CD4-positive, alpha-beta T cell (primary cell): ENCODE measurements at regions of chr20 and their contacts with region 1.

Region 1: DNA sequence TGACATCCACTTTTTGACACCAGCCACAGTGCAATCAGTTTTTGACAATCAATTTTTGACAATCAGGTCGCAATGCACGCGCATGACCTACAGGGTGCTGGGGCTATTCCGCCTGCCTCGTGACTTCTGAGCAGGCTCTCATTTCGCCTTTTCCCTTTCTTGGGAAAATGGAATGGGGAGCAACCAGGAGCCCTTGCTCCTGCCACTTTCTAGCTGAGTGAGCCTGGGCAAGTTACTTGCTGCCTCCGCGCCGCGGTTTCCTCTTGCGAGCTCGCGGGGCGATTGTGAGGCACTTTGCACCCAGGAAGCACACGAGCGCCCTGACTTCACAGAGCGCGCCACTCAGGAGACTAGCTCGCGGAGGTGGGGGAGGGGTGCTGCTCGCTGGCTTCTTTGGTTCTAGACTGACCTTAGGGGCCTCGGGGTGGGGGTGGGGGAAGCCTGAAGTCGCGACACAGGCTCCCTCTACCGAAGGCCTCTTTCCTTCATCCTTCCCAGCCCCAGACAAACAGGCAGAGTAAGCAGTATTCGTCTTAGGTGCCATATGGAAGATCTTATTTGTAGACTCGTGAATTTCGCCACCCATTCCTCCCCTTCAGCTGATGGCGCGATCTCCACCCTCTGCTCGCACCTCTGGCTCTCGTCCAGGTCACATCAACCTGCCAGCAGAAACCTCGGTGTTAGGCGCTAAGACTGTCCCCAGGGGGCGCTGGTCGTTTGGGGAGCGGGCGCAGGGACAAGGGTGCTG is 4.6 kb downstream of the TP53TG5 start:
- DNase-seq: peak; percentile 84 to 95 (median 89)
- ATAC-seq: peak; percentile 89
- H3K4me3 ChIP-seq: peak overlapping the region; percentile 63
- H3K4me3 Mint-ChIP-seq: peak overlapping the region; percentile 90
- H3K27ac ChIP-seq: peak overlapping the region; percentile 62 to 73
- H3K27ac Mint-ChIP-seq: peak overlapping the region; percentile 96
- H3K4me1 ChIP-seq: peaks cover 32% of the 10 kb centered on the region
- H3K4me1 Mint-ChIP-seq: peaks cover 46% of the 10 kb centered on the region
- H3K27me3 ChIP-seq: no peaks in the 10 kb centered on the region
- H3K27me3 Mint-ChIP-seq: no peaks in the 10 kb centered on the region
- CTCF ChIP-seq: peak; percentile 86

Region 2: DNA sequence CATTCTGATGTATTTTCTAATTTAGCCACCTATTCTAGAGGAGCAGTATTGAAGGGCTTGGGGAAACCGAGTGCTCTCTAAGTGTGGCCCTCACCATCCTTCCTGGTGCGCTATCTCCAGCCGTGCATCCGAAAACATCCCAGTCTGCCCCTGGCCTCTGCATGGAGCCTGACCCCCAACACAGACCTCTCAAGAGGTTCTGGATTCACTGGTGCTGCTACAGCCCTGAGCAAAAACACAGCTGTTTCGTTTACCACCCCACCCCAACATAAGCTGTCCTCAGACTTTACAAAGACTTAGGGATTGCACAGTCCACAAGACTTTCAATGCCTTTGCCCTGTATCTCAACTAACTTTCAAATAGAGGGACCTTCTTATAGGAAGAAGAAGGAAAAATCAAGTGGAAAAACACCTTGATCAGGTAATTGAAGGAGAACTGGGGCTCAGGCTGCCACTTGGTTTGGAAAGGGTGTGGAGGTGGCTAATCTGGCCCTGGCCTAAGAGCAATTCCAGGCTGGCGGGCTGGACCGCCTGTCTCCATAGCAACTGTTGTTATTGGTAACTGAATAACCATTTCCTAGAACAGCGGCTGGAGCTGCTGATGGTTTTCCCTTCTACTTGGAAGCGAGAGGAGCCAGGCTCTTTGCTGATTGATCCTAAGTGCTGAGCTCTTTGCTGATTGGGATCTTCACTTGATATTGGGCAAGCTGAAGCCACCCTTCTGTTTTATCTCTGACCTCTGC is 1549.0 kb before region 1 on chr20:
- CTCF ChIA-PET with region 1: no interaction called
- POLR2A ChIA-PET with region 1: no interaction called
- intact Hi-C with region 1: no loop called
- DNase-seq: no peak
- ATAC-seq: no peak
- H3K4me3 ChIP-seq: no peak overlapping the region
- H3K4me3 Mint-ChIP-seq: no peak overlapping the region
- H3K27ac ChIP-seq: no peak overlapping the region
- H3K27ac Mint-ChIP-seq: no peak overlapping the region
- H3K4me1 ChIP-seq: no peaks in the 10 kb centered on the region
- H3K4me1 Mint-ChIP-seq: no peaks in the 10 kb centered on the region
- H3K27me3 ChIP-seq: no peaks in the 10 kb centered on the region
- H3K27me3 Mint-ChIP-seq: peaks cover 3% of the 10 kb centered on the region
- CTCF ChIP-seq: no peak

Region 3: GRCh38 chr20:45406259-45407066 is 32.9 kb after region 1 on chr20:
- CTCF ChIA-PET with region 1: interaction called, 6 read pairs
- POLR2A ChIA-PET with region 1: interaction called, 49 read pairs
- intact Hi-C with region 1: loop called in 1 of 2 experiments (anchors 2 kb)
- DNase-seq: peak in 12 of 14 experiments; percentile 14 to 69 (median 42)
- ATAC-seq: peak; percentile 50
- H3K4me3 ChIP-seq: peak overlapping the region; percentile 76
- H3K4me3 Mint-ChIP-seq: peak overlapping the region; percentile 91
- H3K27ac ChIP-seq: peak overlapping the region; percentile 40 to 65
- H3K27ac Mint-ChIP-seq: peak overlapping the region; percentile 60
- H3K4me1 ChIP-seq: peaks cover 27% of the 10 kb centered on the region
- H3K4me1 Mint-ChIP-seq: peaks cover 26% of the 10 kb centered on the region
- H3K27me3 ChIP-seq: no peaks in the 10 kb centered on the region
- H3K27me3 Mint-ChIP-seq: no peaks in the 10 kb centered on the region
- CTCF ChIP-seq: no peak

Region 4: DNA sequence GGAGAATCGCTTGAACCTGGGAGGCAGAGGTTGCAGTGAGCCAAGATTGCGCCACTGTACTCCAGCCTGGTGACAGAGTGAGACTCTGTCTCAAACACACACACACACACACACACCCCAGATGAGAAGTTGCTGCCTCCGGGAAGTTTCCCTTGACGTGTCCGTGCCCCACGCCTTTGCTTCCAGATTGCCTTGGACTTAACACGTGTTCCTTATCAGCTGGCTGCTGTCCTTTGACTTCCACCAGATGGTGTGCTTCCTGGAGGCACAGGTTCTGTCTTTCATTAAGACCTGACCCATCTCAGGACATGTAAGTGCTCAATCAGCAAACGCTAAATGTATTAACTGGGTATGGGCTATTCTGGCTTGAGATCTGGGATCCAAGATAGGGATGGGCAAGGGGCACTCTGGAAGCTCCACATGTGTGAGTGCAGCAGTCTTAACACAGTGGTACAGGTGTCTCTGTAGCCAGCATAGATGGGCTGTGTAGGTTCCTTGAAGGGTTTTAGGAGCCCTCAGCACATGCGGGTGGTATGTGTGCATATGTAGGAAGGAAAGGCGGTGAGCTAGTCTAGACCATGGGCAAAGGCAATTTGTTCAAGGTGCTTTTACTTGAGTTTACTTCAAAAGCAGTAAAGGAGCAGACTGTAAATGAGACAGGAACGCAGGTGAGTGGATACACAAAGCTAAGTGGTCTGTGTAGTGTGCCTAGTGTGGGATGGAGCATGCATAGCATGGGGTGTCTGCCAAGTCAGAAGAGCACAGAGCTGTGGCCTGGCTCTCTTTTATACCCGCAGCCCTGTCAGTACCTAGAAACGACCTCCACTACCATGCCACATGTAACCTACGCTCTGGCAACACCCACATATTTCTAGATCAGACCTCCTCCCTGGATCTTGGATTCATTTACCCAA is 54.0 kb after region 1 on chr20:
- CTCF ChIA-PET with region 1: interaction called, 3 read pairs
- POLR2A ChIA-PET with region 1: interaction called, 13 read pairs
- intact Hi-C with region 1: no loop called
- DNase-seq: no peak
- ATAC-seq: no peak
- H3K4me3 ChIP-seq: no peak overlapping the region
- H3K4me3 Mint-ChIP-seq: no peak overlapping the region
- H3K27ac ChIP-seq: no peak overlapping the region
- H3K27ac Mint-ChIP-seq: no peak overlapping the region
- H3K4me1 ChIP-seq: no peaks in the 10 kb centered on the region
- H3K4me1 Mint-ChIP-seq: no peaks in the 10 kb centered on the region
- H3K27me3 ChIP-seq: no peaks in the 10 kb centered on the region
- H3K27me3 Mint-ChIP-seq: no peaks in the 10 kb centered on the region
- CTCF ChIP-seq: no peak

Region 5: GRCh38 chr20:45450097-45450818 is 76.7 kb after region 1 on chr20:
- CTCF ChIA-PET with region 1: interaction called, 11 read pairs
- POLR2A ChIA-PET with region 1: interaction called, 4 read pairs
- intact Hi-C with region 1: no loop called
- DNase-seq: peak in 4 of 14 experiments; percentile 25 to 71 (median 62)
- ATAC-seq: peak; percentile 37
- H3K4me3 ChIP-seq: no peak overlapping the region
- H3K4me3 Mint-ChIP-seq: no peak overlapping the region
- H3K27ac ChIP-seq: no peak overlapping the region
- H3K27ac Mint-ChIP-seq: no peak overlapping the region
- H3K4me1 ChIP-seq: peaks cover 4% of the 10 kb centered on the region
- H3K4me1 Mint-ChIP-seq: peaks cover 12% of the 10 kb centered on the region
- H3K27me3 ChIP-seq: peaks cover 6% of the 10 kb centered on the region in 2 experiments
- H3K27me3 Mint-ChIP-seq: peaks cover 20% of the 10 kb centered on the region
- CTCF ChIP-seq: peak; percentile 74